Endothelial cell of umbilical vein (primary cell): ENCODE measurements at regions of chr13 and their contacts with region 1.

Region 1: GRCh38 chr13:51222037-51222685 is at the start of gene FAM124A:
- DNase-seq: peak; percentile 36
- H3K4me3 ChIP-seq: peak within 1 kb of the TSS; percentile 29 to 64 (median 46)
- H3K27ac ChIP-seq: no peak within 1 kb of the TSS
- H3K4me1 ChIP-seq: peaks cover 7% of the 10 kb centered on the region
- H3K27me3 ChIP-seq: no peaks in the 10 kb centered on the region
- CTCF ChIP-seq: peak in 1 of 2 donors; percentile 37
- POLR2A ChIP-seq: peak; percentile 32
- total RNA-seq, gene FAM124A: 7.4 and 9.9 TPM in 2 replicates

Region 2: GRCh38 chr13:51047434-51048165 is 174.6 kb before region 1 on chr13:
- CTCF ChIA-PET with region 1: no interaction called
- POLR2A ChIA-PET with region 1: no interaction called
- dilution Hi-C with region 1: no loop called
- intact Hi-C with region 1: no loop called
- DNase-seq: no peak
- H3K4me3 ChIP-seq: no peak overlapping the region
- H3K27ac ChIP-seq: no peak overlapping the region
- H3K4me1 ChIP-seq: no peaks in the 10 kb centered on the region
- H3K27me3 ChIP-seq: peaks cover 8 to 10% of the 10 kb centered on the region in 2 experiments
- CTCF ChIP-seq: no peak
- POLR2A ChIP-seq: no peak

Region 3: GRCh38 chr13:51235756-51236490 is 13.8 kb after region 1 on chr13:
- CTCF ChIA-PET with region 1: interaction called, 11 read pairs
- POLR2A ChIA-PET with region 1: no interaction called
- dilution Hi-C with region 1: no loop called
- intact Hi-C with region 1: no loop called
- DNase-seq: peak; percentile 44
- H3K4me3 ChIP-seq: no peak overlapping the region
- H3K27ac ChIP-seq: no peak overlapping the region
- H3K4me1 ChIP-seq: peaks cover 14% of the 10 kb centered on the region
- H3K27me3 ChIP-seq: no peaks in the 10 kb centered on the region
- CTCF ChIP-seq: no peak
- POLR2A ChIP-seq: no peak

Region 4: GRCh38 chr13:51269039-51269438 is 46.9 kb after region 1 on chr13:
- CTCF ChIA-PET with region 1: no interaction called
- POLR2A ChIA-PET with region 1: no interaction called
- dilution Hi-C with region 1: no loop called
- intact Hi-C with region 1: no loop called
- DNase-seq: no peak
- H3K4me3 ChIP-seq: no peak overlapping the region
- H3K27ac ChIP-seq: no peak overlapping the region
- H3K4me1 ChIP-seq: peaks cover 2% of the 10 kb centered on the region
- H3K27me3 ChIP-seq: no peaks in the 10 kb centered on the region
- CTCF ChIP-seq: no peak
- POLR2A ChIP-seq: no peak

Region 5: GRCh38 chr13:51370116-51370515 is 148.0 kb after region 1 on chr13:
- CTCF ChIA-PET with region 1: no interaction called
- POLR2A ChIA-PET with region 1: no interaction called
- dilution Hi-C with region 1: no loop called
- intact Hi-C with region 1: loop called (anchors 10 kb)
- DNase-seq: no peak
- H3K4me3 ChIP-seq: no peak overlapping the region
- H3K27ac ChIP-seq: no peak overlapping the region
- H3K4me1 ChIP-seq: peaks cover 3% of the 10 kb centered on the region
- H3K27me3 ChIP-seq: no peaks in the 10 kb centered on the region
- CTCF ChIP-seq: no peak
- POLR2A ChIP-seq: no peak

Region 6: DNA sequence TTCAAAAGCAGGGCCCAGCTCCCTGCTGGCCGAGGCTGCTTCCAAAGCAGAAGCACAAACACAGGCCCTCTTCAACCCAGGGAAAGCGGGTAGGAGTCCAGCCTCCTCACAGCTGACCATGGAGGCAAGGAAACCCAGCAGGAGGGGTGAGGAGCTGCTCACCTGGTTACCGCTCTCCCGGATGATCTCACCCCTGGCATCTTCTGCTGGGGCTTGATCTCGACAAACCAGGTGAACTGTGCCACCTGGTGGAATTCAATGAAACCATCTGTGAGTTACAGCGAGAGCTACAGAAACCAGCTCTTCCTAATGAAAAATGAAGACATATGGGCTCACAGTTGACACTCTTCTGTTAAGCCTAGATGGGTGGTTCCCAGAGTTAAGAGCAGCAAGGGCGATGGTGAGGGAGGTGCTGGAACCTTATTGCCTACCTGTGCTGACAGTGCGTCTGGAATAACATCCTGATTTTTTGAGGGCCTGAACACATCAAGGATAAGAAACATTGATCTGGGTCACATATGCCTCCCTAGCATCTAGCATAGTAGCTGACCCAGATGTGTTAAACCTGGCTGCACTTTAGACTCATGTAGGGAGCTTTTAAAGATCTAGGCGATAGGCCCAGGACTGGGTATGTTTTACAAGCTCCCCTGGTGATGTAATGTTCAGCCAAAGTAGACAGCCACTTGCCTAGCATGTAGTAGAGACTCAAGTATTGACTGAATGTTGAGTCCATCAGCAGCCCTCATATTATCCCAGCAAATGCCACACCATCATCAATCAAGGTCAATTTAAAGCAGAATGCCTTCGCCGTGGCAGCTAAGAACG is 575.7 kb after region 1 on chr13:
- CTCF ChIA-PET with region 1: interaction called, 4 read pairs
- POLR2A ChIA-PET with region 1: no interaction called
- dilution Hi-C with region 1: no loop called
- intact Hi-C with region 1: loop called (anchors 10 kb)
- DNase-seq: peak; percentile 36
- H3K4me3 ChIP-seq: no peak overlapping the region
- H3K27ac ChIP-seq: no peak overlapping the region
- H3K4me1 ChIP-seq: peaks cover 24% of the 10 kb centered on the region
- H3K27me3 ChIP-seq: no peaks in the 10 kb centered on the region
- CTCF ChIP-seq: peak; percentile 16 to 27
- POLR2A ChIP-seq: no peak